PC-9 (cell line): ENCODE measurements at regions of chr1 and their contacts with region 1.

Region 1: DNA sequence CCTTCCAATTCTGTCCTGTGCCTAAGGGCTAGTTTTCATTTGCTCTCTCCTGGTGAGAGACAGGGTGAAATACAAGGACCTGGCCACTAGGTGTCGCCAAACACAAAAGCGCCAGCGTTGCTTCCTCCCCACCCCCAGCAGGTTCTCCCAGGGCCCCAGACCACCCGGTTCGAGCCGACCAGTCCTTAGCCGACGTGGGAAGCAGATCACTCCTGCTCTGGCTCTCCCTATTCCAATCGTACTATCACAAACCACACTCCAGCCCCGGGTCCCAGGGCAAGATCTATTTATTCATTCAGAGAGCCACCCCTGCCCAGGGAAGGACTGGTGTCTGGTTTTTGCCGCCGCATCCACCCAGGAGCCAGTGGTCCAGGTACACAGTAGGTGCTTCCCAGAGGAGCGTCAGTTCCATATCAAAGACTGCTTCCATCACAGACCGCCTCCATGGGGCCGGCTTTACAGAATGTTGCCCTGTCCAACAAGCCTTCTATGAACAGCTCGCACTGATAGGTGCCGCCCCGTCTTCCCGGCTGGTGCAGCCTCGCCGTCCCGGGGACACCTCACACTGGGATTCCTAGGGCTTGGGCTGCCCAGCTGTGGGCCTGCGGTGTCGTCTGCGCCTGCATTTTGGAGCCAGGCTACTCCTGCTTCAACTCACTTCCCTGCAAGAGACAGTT is 35.0 kb downstream of the CTNNBIP1 start:
- DNase-seq: peak; percentile 43 to 65
- H3K4me3 ChIP-seq: no peak overlapping the region
- H3K27ac ChIP-seq: no peak overlapping the region
- H3K4me1 ChIP-seq: peaks cover 14% of the 10 kb centered on the region
- H3K27me3 ChIP-seq: no peaks in the 10 kb centered on the region
- CTCF ChIP-seq: peak; percentile 90

Region 2: GRCh38 chr1:9798236-9799130 is 76.6 kb before region 1 on chr1:
- CTCF ChIA-PET with region 1: interaction called, 14 read pairs
- POLR2A ChIA-PET with region 1: no interaction called
- intact Hi-C with region 1: no loop called
- DNase-seq: no peak
- H3K4me3 ChIP-seq: no peak overlapping the region
- H3K27ac ChIP-seq: no peak overlapping the region
- H3K4me1 ChIP-seq: no peaks in the 10 kb centered on the region
- H3K27me3 ChIP-seq: no peaks in the 10 kb centered on the region
- CTCF ChIP-seq: no peak

Region 3: GRCh38 chr1:9816199-9816598 is 58.9 kb before region 1 on chr1:
- CTCF ChIA-PET with region 1: no interaction called
- POLR2A ChIA-PET with region 1: no interaction called
- intact Hi-C with region 1: no loop called
- DNase-seq: no peak
- H3K4me3 ChIP-seq: no peak overlapping the region
- H3K27ac ChIP-seq: no peak overlapping the region
- H3K4me1 ChIP-seq: peaks cover 4% of the 10 kb centered on the region
- H3K27me3 ChIP-seq: no peaks in the 10 kb centered on the region
- CTCF ChIP-seq: no peak

Region 4: GRCh38 chr1:9910425-9911178 is 35.5 kb after region 1 on chr1:
- CTCF ChIA-PET with region 1: interaction called, 16 read pairs
- POLR2A ChIA-PET with region 1: interaction called, 6 read pairs
- intact Hi-C with region 1: loop called (anchors 1 kb)
- DNase-seq: peak; percentile 89 to 100
- H3K4me3 ChIP-seq: peak overlapping the region; percentile 58
- H3K27ac ChIP-seq: peak overlapping the region; percentile 64
- H3K4me1 ChIP-seq: peaks cover 12% of the 10 kb centered on the region
- H3K27me3 ChIP-seq: no peaks in the 10 kb centered on the region
- CTCF ChIP-seq: no peak